Cardiac septum (tissue), 1 donor: ENCODE measurements at regions of chr1 and their contacts with region 1.

Region 1: DNA sequence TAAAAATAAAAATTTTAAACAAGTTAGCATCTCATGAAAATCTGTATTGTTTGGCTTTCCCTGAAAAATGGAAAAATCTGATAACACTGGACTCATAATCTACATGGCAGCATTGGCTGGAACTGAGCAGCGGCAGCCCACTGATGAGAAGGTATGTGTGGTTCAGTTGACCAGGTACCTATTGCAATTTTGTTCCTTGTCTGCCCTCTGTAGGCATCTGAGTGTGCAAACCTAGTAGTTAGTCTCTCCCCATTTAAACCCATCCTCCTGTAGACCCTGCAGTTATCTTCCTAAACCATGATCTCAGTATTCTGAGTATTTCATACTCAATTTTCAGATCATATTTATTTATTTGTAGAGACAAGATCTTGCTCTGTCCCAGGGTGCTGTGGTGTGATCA is 59.4 kb upstream of the SERBP1 start:
- DNase-seq: no peak

Region 2: DNA sequence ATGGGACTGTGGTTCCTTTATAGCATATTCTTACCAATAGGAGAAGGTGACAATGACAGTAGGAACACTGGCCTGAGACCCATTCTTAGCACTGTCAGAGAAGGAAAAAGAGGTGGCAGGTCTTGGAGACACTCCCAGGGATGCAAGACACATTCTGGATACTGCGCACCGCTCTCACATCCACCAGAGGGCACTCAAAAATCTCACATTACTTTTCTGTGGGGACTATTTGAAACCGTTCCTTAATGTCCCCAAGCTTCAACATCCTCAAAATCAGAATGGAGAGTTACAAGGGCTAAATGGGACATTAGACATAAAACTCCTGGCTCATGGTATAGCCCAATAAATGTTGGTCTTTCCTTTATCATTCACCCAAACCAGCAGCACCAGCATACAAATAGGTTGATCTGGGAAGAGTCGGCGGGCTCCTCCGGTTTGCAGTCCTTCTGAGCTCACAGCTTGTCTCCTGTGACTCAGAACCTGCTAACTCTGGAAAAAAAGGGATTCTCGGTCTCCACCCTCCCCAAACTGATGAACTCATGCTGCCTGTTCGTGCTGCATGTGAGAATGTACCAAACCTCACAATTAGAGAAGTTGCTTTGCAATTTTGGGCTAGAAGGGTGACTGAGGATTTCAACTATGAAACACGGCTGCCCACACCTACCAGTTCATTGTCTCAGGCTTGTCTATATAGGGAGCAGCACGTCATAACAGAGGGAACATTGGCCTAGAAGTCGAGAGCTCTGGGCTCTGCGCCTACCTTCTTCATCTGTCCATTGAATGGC is 141.8 kb before region 1 on chr1:
- intact Hi-C with region 1: loop called (anchors 2 kb)
- DNase-seq: no peak